Heart right ventricle (tissue), 16 donors: ENCODE measurements at regions of chr16 and their contacts with region 1.

Region 1: GRCh38 chr16:84738255-84739038 is 38.6 kb downstream of the USP10 start:
- DNase-seq: peak; percentile 58 to 82
- ATAC-seq: peak; percentile 58 to 80 (median 68)
- H3K4me3 ChIP-seq: no peak overlapping the region
- H3K27ac ChIP-seq: peak overlapping the region in 3 of 10 donors; percentile 4 to 77 (median 12)
- H3K4me1 ChIP-seq: peaks cover 5 to 74% (median 68%) of the 10 kb centered on the region in 9 donors
- H3K27me3 ChIP-seq: no peaks in the 10 kb centered on the region
- CTCF ChIP-seq: peak; percentile 78 to 94 (median 89)

Region 2: GRCh38 chr16:84511180-84511824 is 227.1 kb before region 1 on chr16:
- intact Hi-C with region 1: loop called in 1 of 10 experiments (anchors 5 kb)
- DNase-seq: peak; percentile 83 to 85
- ATAC-seq: peak; percentile 40 to 92 (median 84)
- H3K4me3 ChIP-seq: peak overlapping the region in 2 of 10 donors; percentile 10 to 14
- H3K27ac ChIP-seq: peak overlapping the region in 1 of 10 donors; percentile 87
- H3K4me1 ChIP-seq: peaks cover 0 to 46% (median 3%) of the 10 kb centered on the region in 9 donors
- H3K27me3 ChIP-seq: no peaks in the 10 kb centered on the region
- CTCF ChIP-seq: peak; percentile 94 to 99 (median 97)

Region 3: DNA sequence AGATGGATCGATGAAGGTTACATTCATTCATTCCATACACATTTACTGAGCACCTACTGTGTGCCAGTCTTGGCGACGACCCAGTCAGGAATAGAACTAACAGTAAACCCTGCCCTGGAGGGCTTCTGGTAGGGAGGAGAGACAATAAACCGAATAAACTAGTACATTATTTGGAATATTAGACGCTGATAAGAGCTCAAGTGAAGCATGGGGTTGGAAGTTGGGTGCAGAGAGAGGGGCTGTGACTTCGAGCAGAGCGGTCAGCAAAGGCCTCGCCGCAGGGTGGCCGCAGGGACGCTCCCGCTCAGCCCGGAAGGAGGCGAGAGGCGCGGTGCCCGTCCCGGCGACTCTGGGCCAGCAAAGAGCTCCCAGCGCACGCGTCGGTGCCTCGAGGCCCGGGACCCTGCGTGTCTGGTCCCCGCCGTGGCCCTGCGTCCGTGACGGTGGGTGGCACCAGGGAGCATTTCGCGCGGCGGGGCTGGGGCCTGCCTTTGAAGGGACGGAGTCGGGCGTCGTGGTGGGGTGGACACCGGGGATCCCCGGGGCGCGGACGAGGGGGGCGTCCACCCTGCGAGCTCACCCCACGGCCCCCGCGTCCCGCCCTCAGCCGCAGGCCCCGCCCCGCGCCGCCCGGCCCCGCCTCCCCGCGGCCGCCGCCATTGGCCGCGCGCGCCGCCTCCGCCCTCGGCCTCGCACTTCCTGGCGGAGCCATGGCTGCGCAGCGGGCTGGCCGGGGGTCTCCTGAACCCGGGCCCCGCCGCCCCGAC is 90.4 kb before region 1 on chr16 and contains the start of gene KLHL36:
- intact Hi-C with region 1: loop called in 1 of 10 experiments (anchors 5 kb)
- DNase-seq: peak; percentile 51 to 77
- ATAC-seq: peak; percentile 51 to 89 (median 68)
- H3K4me3 ChIP-seq: peak within 1 kb of the TSS; percentile 55 to 100 (median 81)
- H3K27ac ChIP-seq: peak within 1 kb of the TSS; percentile 88 to 97 (median 92)
- H3K4me1 ChIP-seq: peaks cover 2 to 40% (median 31%) of the 10 kb centered on the region in 9 donors
- H3K27me3 ChIP-seq: no peaks in the 10 kb centered on the region
- CTCF ChIP-seq: peak in 2 of 9 donors; percentile 8 to 22
- total RNA-seq, gene KLHL36: 40.0 to 77.9 (median 58.4) TPM

Region 4: GRCh38 chr16:84672276-84673202 is 65.9 kb before region 1 on chr16:
- intact Hi-C with region 1: loop called in 1 of 10 experiments (anchors 5 kb)
- DNase-seq: peak; percentile 67 to 84
- ATAC-seq: peak; percentile 46 to 93 (median 87)
- H3K4me3 ChIP-seq: no peak overlapping the region
- H3K27ac ChIP-seq: no peak overlapping the region
- H3K4me1 ChIP-seq: peaks cover 0 to 7% (median 0%) of the 10 kb centered on the region in 9 donors
- H3K27me3 ChIP-seq: peaks cover 0 to 5% (median 0%) of the 10 kb centered on the region in 7 donors
- CTCF ChIP-seq: peak; percentile 88 to 94 (median 93)